Activated naive CD4-positive, alpha-beta T cell treated with anti-CD3 and anti-CD28 coated beads for 36 hours (primary cell): ENCODE measurements at regions of chr11 and their contacts with region 1.

Region 1: DNA sequence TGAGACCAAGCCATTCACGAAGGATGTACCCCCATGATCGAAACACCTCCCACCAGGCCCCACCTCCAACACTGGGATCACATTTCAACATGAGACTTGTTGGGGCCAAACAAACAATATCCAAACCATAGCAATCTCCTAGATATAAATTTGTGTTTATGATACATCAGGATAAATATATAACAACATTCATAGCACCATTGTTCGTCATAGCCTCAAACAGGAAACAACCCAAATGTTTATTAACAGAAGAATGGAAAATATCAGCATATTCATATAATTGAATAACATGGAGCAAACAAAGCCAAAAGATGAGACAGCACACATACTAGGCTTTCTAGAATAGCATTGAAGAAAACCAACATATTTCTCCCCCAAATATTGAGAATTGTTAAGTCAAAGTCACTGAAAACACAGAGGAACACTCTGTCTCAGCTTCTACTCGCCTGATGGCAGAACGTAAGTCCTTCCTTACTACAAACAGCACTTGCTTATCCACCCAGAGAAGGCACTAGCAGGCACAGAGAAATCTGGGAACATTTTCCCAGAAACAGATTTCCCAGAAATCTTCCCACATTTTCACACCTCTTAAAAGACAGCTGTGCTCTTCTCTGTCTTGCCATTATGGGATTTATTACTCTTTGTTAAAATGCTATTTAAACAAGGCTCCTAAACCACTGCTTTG is 8.1 kb upstream of the GDPD4 start:
- DNase-seq: no peak
- H3K4me3 Mint-ChIP-seq: no peak overlapping the region
- H3K27ac Mint-ChIP-seq: no peak overlapping the region
- H3K4me1 Mint-ChIP-seq: peaks cover 15% of the 10 kb centered on the region
- H3K27me3 Mint-ChIP-seq: no peaks in the 10 kb centered on the region

Region 2: GRCh38 chr11:76903329-76903728 is 406.2 kb before region 1 on chr11:
- CTCF ChIA-PET with region 1: no interaction called
- intact Hi-C with region 1: no loop called
- DNase-seq: no peak
- H3K4me3 Mint-ChIP-seq: no peak overlapping the region
- H3K27ac Mint-ChIP-seq: no peak overlapping the region
- H3K4me1 Mint-ChIP-seq: no peaks in the 10 kb centered on the region
- H3K27me3 Mint-ChIP-seq: no peaks in the 10 kb centered on the region

Region 3: DNA sequence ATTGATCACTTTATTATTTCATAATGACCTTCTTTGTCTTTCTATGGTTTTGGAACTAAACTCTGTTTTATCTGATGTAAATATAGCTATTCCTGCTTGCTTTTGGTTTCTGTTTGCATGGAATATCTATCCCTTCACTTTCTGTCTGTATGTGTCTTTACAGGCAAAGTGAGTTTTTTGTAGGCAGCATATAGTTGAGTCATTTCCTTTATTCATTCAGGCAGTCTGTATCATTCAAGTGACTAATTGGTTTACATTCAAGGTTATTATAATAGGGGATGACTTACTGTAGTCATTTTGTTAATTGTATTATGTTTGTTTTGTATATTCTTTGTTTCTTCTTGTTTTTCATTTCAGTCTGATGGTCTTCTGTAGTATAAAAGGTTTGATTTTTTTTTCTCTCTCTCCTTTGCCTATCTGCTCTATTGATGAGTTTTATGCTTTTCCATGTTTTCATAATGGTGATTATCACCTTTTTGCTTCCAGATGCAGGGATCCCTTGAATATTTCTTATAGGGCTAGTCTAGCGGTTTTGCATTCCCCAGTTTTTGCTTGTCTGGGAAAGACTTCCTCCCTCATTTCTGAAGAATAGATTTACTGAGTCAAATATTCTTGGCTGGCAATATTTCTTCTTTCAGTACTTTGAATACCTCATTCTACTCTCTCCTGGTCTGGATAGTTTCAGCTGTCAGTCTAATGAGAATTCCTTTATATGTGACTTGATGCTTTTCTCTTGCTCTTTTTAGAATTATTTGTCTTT is 58.5 kb before region 1 on chr11:
- CTCF ChIA-PET with region 1: no interaction called
- intact Hi-C with region 1: loop called (anchors 1 kb)
- DNase-seq: no peak
- H3K4me3 Mint-ChIP-seq: no peak overlapping the region
- H3K27ac Mint-ChIP-seq: peak overlapping the region; percentile 48
- H3K4me1 Mint-ChIP-seq: peaks cover 27% of the 10 kb centered on the region
- H3K27me3 Mint-ChIP-seq: peaks cover 3% of the 10 kb centered on the region

Region 4: DNA sequence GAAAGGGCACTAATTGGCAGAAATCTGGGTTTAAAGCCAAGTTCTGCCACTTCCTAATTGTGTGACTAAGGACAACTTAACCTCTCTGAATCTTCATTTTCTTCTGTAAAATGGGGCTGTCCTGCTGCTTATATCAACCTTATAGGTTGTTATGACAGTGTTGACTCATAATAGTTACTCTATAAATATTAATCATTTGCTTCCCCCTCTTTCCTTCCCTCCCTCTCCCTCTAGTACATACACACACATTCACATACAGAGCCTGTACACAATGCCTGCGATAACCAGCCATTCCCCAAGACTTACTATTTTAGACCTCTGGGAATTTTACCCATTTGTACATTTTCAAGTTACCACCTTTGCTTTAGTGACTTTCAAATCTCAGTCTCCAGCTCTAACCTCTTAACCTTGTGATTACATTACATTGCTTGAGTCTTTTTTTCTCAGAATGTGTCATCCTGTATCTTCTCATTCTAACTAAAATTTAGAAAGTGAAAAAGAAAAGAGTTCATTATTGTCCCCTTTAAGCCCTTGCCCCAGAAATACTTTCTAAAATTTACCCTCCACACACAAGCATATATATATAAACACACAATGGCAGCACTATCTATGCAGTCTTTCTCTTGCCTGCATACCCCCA is 39.9 kb before region 1 on chr11:
- CTCF ChIA-PET with region 1: no interaction called
- intact Hi-C with region 1: loop called (anchors 1 kb)
- DNase-seq: no peak
- H3K4me3 Mint-ChIP-seq: no peak overlapping the region
- H3K27ac Mint-ChIP-seq: peak overlapping the region; percentile 31
- H3K4me1 Mint-ChIP-seq: peaks cover 13% of the 10 kb centered on the region
- H3K27me3 Mint-ChIP-seq: peaks cover 2% of the 10 kb centered on the region

Region 5: GRCh38 chr11:77325159-77325558 is 15.6 kb after region 1 on chr11:
- CTCF ChIA-PET with region 1: no interaction called
- intact Hi-C with region 1: loop called (anchors 1 kb)
- DNase-seq: no peak
- H3K4me3 Mint-ChIP-seq: no peak overlapping the region
- H3K27ac Mint-ChIP-seq: no peak overlapping the region
- H3K4me1 Mint-ChIP-seq: peaks cover 9% of the 10 kb centered on the region
- H3K27me3 Mint-ChIP-seq: no peaks in the 10 kb centered on the region